HepG2 (cell line): ENCODE measurements at regions of chr16 and their contacts with region 1.

Region 1: DNA sequence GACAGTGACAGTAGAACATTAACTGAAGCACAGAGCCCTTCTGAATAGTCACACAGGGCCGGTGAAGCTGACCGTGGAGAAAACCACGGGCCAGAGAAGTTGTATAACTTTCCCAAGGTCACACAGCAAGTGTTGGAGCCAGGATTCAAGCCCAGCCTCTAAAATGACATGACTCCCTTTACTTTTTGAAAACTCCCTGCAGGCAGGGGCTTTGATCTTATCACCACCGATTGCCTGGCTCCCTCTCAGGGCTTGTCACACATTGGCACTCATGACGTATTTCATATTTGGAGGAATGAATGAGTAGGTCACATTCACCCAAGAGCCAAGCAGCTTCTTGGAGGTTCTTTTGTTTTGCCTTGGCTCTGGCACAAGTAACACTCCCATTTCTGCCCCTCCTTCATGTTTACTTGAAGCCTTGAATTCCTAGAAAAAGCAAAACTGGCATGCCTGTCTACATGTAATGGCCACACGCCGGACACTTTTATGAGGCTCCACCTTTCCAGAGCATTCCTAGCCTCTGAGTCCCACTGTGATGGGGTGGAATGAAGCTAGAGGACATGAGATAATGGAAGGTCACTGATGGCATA is 13.3 kb upstream of the RBBP6 start:
- DNase-seq: peak; percentile 58
- ATAC-seq: peak; percentile 56
- H3K4me3 ChIP-seq: 0 out of 6 replicates have a peak overlapping the region, but pooled peaks of 1 of the 3 experiments have one; percentile 10
- H3K27ac ChIP-seq: no peak overlapping the region
- H3K4me1 ChIP-seq: peaks cover 33% of the 10 kb centered on the region
- H3K27me3 ChIP-seq: peaks cover 0 to 8% of the 10 kb centered on the region in 2 experiments; a peak in 2 of 5 replicates
- CTCF ChIP-seq: no peak
- EP300 ChIP-seq: no peak
- POLR2A ChIP-seq: no peak
- RAD21 ChIP-seq: no peak

Region 2: GRCh38 chr16:24463196-24463945 is 62.7 kb before region 1 on chr16:
- CTCF ChIA-PET with region 1: no interaction called
- POLR2A ChIA-PET with region 1: no interaction called
- in situ Hi-C with region 1: no loop called
- intact Hi-C with region 1: no loop called
- DNase-seq: no peak
- ATAC-seq: no peak
- H3K4me3 ChIP-seq: no peak overlapping the region
- H3K27ac ChIP-seq: no peak overlapping the region
- H3K4me1 ChIP-seq: no peaks in the 10 kb centered on the region
- H3K27me3 ChIP-seq: no peaks in the 10 kb centered on the region; a peak in 1 of 5 replicates
- CTCF ChIP-seq: no peak
- EP300 ChIP-seq: no peak
- POLR2A ChIP-seq: no peak
- RAD21 ChIP-seq: no peak

Region 3: GRCh38 chr16:24508614-24509013 is 17.5 kb before region 1 on chr16:
- CTCF ChIA-PET with region 1: no interaction called
- POLR2A ChIA-PET with region 1: no interaction called
- in situ Hi-C with region 1: no loop called
- intact Hi-C with region 1: no loop called
- DNase-seq: no peak
- ATAC-seq: no peak
- H3K4me3 ChIP-seq: no peak overlapping the region
- H3K27ac ChIP-seq: no peak overlapping the region
- H3K4me1 ChIP-seq: peaks cover 4% of the 10 kb centered on the region; the same call in 1 of the 2 replicates
- H3K27me3 ChIP-seq: 0 out of 5 replicates have a peak, but pooled peaks cover 0 to 6% of the 10 kb centered on the region in 2 experiments
- CTCF ChIP-seq: no peak
- EP300 ChIP-seq: no peak
- POLR2A ChIP-seq: no peak
- RAD21 ChIP-seq: no peak

Region 4: DNA sequence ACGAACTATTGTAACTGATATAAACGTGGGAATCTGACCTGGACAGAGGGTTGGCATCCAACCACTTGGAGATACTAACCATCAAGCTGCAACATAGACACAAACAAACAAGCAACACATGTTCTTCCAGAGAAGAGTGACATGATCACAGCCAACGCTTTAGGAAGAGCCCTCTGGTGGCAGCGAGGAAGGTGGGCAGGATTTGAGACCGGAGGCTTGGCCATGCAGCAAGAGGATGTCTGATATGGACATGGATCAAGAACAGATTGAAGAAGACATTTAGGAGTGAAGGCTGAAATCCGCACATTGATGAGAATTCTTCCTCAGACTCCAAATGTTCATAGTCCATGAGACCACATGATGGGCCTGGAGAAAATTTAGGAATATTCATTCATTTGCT is 163.1 kb after region 1 on chr16:
- CTCF ChIA-PET with region 1: no interaction called
- POLR2A ChIA-PET with region 1: no interaction called
- in situ Hi-C with region 1: loop called (anchors 10 kb)
- intact Hi-C with region 1: no loop called
- DNase-seq: peak; percentile 53
- ATAC-seq: peak; percentile 78
- H3K4me3 ChIP-seq: no peak overlapping the region
- H3K27ac ChIP-seq: no peak overlapping the region
- H3K4me1 ChIP-seq: peaks cover 34% of the 10 kb centered on the region
- H3K27me3 ChIP-seq: peaks cover 0 to 2% of the 10 kb centered on the region in 2 experiments; a peak in 1 of 5 replicates
- CTCF ChIP-seq: peak; percentile 81
- EP300 ChIP-seq: no peak
- POLR2A ChIP-seq: no peak
- RAD21 ChIP-seq: peak; percentile 56; the same call in 1 of the 2 replicates

Region 5: DNA sequence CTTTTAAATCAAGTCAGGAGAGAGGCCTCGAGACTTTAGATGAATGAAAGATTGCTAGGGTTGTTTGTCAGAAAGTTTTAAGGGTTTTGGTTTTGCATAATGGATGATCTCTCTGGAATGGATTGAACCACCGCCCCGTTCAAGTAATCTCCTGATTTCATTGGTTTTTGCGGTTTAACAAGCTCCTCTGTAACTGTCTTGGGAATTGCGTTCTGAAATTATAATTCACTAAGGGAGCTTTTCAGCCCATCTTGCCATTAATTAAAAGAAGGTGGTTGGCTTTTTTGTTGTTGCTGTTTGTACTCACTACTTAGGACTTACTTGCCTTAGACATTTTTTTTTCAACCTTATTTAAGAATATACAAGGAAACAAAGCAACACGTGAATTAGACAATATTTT is 1174.5 kb after region 1 on chr16:
- CTCF ChIA-PET with region 1: no interaction called
- POLR2A ChIA-PET with region 1: no interaction called
- in situ Hi-C with region 1: no loop called
- intact Hi-C with region 1: loop called (anchors 5 kb)
- DNase-seq: no peak
- ATAC-seq: no peak
- H3K4me3 ChIP-seq: no peak overlapping the region
- H3K27ac ChIP-seq: no peak overlapping the region
- H3K4me1 ChIP-seq: no peaks in the 10 kb centered on the region
- H3K27me3 ChIP-seq: peaks cover 0 to 21% of the 10 kb centered on the region in 2 experiments; a peak in 2 of 5 replicates
- CTCF ChIP-seq: no peak
- EP300 ChIP-seq: no peak
- POLR2A ChIP-seq: no peak
- RAD21 ChIP-seq: no peak